ENCODE measurements at regions of chr1 and their contacts with region 1.

Region 1: GRCh38 chr1:201559679-201560162 is 20.8 kb downstream of the NAV1 start:
- DNase-seq: peak; percentile 72 to 88
- H3K4me3 ChIP-seq: no peak overlapping the region
- H3K27ac ChIP-seq: no peak overlapping the region
- H3K4me1 ChIP-seq: peaks cover 0 to 8% (median 3%) of the 10 kb centered on the region in 4 experiments; a peak in 4 of 7 replicates
- H3K27me3 ChIP-seq: 0 out of 7 replicates have a peak, but pooled peaks cover 0 to 2% (median 0%) of the 10 kb centered on the region in 4 experiments
- CTCF ChIP-seq: peak; percentile 95 to 99 (median 98)
- EP300 ChIP-seq: 0 out of 3 replicates have a peak, but pooled peaks of 1 of the 2 experiments have one; percentile 20
- POLR2A ChIP-seq: no peak
- RAD21 ChIP-seq: peak; percentile 100

Region 2: DNA sequence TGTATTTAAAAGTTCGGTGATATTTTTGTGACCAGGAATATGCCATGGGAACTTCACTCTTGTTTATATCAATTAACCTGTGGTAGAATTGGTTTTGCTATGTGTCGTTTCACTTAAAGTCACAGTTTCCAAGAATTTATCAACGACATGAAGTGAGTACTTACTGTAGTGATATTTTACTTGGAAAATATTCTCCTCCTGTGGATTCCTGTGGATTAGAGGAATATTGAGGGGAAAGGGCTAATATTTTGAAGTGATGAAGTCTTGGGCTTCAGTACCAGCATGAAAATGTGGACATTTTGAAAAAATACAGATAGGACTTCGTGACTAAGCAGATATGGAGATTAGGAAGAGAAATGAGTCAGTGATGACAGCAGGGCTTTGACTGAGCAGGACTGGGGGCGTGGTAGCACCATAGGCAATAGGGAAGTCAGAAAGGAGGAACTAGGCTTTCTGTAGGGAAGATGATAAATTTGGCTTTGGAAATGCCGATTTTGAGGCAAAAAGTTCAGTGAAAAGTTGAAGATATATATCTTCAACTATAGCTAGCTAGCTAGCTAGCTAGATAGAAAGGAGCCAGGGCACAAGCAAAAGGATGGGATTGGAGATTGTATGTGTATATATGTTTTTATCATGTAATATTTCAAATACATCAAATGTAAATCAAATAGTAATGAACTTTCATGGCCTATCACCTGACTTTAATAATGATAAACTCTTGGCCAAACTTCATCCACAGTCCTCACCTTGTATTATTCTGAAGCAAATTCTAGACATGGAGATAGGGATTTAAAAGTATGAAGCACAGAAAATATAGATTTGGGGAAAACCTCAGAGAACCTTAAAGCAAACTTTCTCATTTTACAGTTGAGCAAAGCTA is 919.7 kb before region 1 on chr1:
- CTCF ChIA-PET with region 1: no interaction called
- POLR2A ChIA-PET with region 1: no interaction called
- DNase-seq: no peak
- H3K4me3 ChIP-seq: no peak overlapping the region
- H3K27ac ChIP-seq: no peak overlapping the region
- H3K4me1 ChIP-seq: no peaks in the 10 kb centered on the region
- H3K27me3 ChIP-seq: no peaks in the 10 kb centered on the region
- CTCF ChIP-seq: no peak
- EP300 ChIP-seq: no peak
- POLR2A ChIP-seq: no peak
- RAD21 ChIP-seq: no peak

Region 3: DNA sequence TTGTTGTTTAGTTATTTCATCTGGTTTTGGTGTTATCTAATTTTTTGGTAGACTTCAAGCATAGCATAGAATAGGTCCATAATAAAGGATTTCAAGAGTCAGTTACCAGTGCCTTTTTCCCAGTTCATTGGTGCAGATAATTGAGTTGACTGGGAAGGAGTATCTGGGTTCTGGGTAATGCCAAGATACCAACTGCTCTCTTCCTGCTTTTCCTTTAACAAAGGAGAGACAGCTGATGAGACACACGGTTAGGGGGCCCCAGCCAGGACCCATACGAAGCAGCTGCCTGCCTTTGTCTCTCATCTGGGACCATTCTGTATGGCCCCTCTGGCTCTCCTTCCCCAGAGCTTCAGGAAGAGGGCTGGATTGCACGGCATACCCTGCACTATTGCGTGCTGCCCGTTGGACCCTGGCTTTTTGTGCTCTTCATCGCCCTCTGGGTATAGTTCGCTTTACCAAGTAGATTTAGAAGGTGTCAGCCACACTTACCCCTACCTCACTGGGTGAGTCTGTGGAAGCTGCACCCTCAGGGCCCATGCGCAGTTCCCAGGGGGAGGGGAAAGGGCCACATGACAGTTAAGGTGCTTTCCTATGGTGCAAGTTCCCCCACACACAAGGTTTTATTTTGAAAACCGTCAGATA is 13.7 kb before region 1 on chr1:
- CTCF ChIA-PET with region 1: interaction called, 56 read pairs
- POLR2A ChIA-PET with region 1: no interaction called
- DNase-seq: no peak
- H3K4me3 ChIP-seq: no peak overlapping the region
- H3K27ac ChIP-seq: no peak overlapping the region
- H3K4me1 ChIP-seq: peaks cover 0 to 2% (median 2%) of the 10 kb centered on the region in 4 experiments; a peak in 3 of 7 replicates
- H3K27me3 ChIP-seq: peaks cover 0 to 8% (median 5%) of the 10 kb centered on the region in 4 experiments; a peak in 6 of 7 replicates
- CTCF ChIP-seq: peak; percentile 37 to 48 (median 46)
- EP300 ChIP-seq: no peak
- POLR2A ChIP-seq: no peak
- RAD21 ChIP-seq: peak in 1 of 2 experiments; percentile 26; a peak in 2 of 4 replicates

Region 4: DNA sequence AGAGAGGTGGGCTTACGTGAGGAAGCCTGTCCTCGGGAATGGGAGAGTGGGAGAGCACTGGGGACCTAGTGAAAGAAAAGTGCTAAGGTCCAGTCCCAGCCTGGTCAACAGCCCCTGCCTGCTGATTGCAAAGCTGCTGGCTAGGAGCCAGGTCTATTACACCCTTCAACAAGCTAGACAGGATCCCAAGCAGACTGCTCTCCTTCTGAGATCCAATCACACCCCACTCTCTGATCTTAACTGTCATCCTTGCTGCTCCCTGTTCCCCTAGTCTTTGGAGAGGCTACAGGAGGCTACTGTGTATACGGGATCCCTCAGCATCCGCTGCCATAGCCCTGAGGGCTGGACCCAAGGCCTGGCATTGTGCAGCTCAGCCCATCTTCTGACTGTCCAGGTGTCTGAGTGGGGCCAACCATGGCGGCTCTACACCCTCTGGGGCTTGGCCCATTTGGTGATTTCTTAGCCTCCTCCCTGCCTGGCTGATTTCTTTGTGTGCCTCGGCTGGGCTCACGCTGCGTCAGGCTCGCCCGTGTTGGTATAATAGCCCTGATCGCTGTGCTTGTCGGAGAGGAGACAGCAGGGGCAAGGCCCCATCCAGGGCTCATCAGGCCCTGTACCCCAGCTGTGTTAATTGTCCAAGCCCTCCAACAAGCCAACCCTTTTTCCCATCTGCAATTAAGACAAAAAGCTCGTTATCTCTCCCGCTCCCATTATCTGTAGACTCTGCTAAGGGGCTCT is 23.2 kb after region 1 on chr1:
- CTCF ChIA-PET with region 1: interaction called, 79 read pairs
- POLR2A ChIA-PET with region 1: no interaction called
- DNase-seq: no peak
- H3K4me3 ChIP-seq: no peak overlapping the region
- H3K27ac ChIP-seq: no peak overlapping the region
- H3K4me1 ChIP-seq: peaks cover 0 to 6% (median 4%) of the 10 kb centered on the region in 4 experiments; a peak in 5 of 7 replicates
- H3K27me3 ChIP-seq: no peaks in the 10 kb centered on the region; a peak in 1 of 7 replicates
- CTCF ChIP-seq: no peak
- EP300 ChIP-seq: no peak
- POLR2A ChIP-seq: no peak
- RAD21 ChIP-seq: no peak

Region 5: GRCh38 chr1:201625226-201625761 is 65.6 kb after region 1 on chr1:
- CTCF ChIA-PET with region 1: interaction called, 26 read pairs
- POLR2A ChIA-PET with region 1: no interaction called
- DNase-seq: no peak
- H3K4me3 ChIP-seq: no peak overlapping the region
- H3K27ac ChIP-seq: no peak overlapping the region
- H3K4me1 ChIP-seq: peaks cover 0 to 4% (median 1%) of the 10 kb centered on the region in 4 experiments; a peak in 2 of 7 replicates
- H3K27me3 ChIP-seq: no peaks in the 10 kb centered on the region
- CTCF ChIP-seq: no peak
- EP300 ChIP-seq: no peak
- POLR2A ChIP-seq: no peak
- RAD21 ChIP-seq: no peak

Region 6: GRCh38 chr1:201696217-201696761 is 136.6 kb after region 1 on chr1:
- CTCF ChIA-PET with region 1: interaction called, 499 read pairs
- POLR2A ChIA-PET with region 1: no interaction called
- DNase-seq: no peak
- H3K4me3 ChIP-seq: no peak overlapping the region
- H3K27ac ChIP-seq: no peak overlapping the region
- H3K4me1 ChIP-seq: peaks cover 16 to 24% (median 19%) of the 10 kb centered on the region in 4 experiments
- H3K27me3 ChIP-seq: no peaks in the 10 kb centered on the region
- CTCF ChIP-seq: no peak
- EP300 ChIP-seq: no peak
- POLR2A ChIP-seq: no peak
- RAD21 ChIP-seq: no peak